Activated CD8-positive, alpha-beta T cell treated with anti-CD3 and anti-CD28 coated beads for 36 hours (primary cell): ENCODE measurements at regions of chr14 and their contacts with region 1.

Region 1: GRCh38 chr14:39232554-39233415 is 930 bp upstream of the MIA2 start:
- DNase-seq: no peak
- ATAC-seq: no peak
- H3K4me3 Mint-ChIP-seq: no peak overlapping the region
- H3K27ac Mint-ChIP-seq: peak overlapping the region; percentile 84
- H3K4me1 Mint-ChIP-seq: peaks cover 42% of the 10 kb centered on the region
- H3K27me3 Mint-ChIP-seq: no peaks in the 10 kb centered on the region
- CTCF ChIP-seq: no peak

Region 2: DNA sequence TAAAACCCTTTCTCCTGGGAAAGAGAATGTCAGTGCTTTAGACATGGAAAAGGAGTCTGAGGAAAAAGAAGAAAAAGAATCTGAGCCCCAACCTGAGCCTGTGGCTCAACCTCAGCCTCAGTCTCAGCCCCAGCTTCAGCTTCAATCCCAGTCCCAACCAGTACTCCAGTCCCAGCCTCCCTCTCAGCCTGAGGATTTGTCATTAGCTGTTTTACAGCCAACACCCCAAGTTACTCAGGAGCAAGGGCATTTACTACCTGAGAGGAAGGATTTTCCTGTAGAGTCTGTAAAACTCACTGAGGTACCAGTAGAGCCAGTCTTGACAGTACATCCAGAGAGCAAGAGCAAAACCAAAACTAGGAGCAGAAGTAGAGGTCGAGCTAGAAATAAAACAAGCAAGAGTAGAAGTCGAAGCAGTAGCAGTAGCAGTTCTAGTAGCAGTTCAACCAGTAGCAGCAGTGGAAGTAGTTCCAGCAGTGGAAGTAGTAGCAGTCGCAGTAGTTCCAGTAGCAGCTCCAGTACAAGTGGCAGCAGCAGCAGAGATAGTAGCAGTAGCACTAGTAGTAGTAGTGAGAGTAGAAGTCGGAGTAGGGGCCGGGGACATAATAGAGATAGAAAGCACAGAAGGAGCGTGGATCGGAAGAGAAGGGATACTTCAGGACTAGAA is 51.6 kb before region 1 on chr14:
- CTCF ChIA-PET with region 1: no interaction called
- POLR2A ChIA-PET with region 1: interaction called, 9 read pairs
- intact Hi-C with region 1: loop called (anchors 5 kb)
- DNase-seq: no peak
- ATAC-seq: no peak
- H3K4me3 Mint-ChIP-seq: no peak overlapping the region
- H3K27ac Mint-ChIP-seq: no peak overlapping the region
- H3K4me1 Mint-ChIP-seq: peaks cover 27% of the 10 kb centered on the region
- H3K27me3 Mint-ChIP-seq: no peaks in the 10 kb centered on the region
- CTCF ChIP-seq: no peak

Region 3: GRCh38 chr14:39247256-39247655 is 14.5 kb after region 1 on chr14:
- CTCF ChIA-PET with region 1: interaction called, 15 read pairs
- POLR2A ChIA-PET with region 1: interaction called, 5 read pairs
- intact Hi-C with region 1: no loop called
- DNase-seq: no peak
- ATAC-seq: no peak
- H3K4me3 Mint-ChIP-seq: no peak overlapping the region
- H3K27ac Mint-ChIP-seq: no peak overlapping the region
- H3K4me1 Mint-ChIP-seq: no peaks in the 10 kb centered on the region
- H3K27me3 Mint-ChIP-seq: peaks cover 2% of the 10 kb centered on the region
- CTCF ChIP-seq: no peak

Region 4: DNA sequence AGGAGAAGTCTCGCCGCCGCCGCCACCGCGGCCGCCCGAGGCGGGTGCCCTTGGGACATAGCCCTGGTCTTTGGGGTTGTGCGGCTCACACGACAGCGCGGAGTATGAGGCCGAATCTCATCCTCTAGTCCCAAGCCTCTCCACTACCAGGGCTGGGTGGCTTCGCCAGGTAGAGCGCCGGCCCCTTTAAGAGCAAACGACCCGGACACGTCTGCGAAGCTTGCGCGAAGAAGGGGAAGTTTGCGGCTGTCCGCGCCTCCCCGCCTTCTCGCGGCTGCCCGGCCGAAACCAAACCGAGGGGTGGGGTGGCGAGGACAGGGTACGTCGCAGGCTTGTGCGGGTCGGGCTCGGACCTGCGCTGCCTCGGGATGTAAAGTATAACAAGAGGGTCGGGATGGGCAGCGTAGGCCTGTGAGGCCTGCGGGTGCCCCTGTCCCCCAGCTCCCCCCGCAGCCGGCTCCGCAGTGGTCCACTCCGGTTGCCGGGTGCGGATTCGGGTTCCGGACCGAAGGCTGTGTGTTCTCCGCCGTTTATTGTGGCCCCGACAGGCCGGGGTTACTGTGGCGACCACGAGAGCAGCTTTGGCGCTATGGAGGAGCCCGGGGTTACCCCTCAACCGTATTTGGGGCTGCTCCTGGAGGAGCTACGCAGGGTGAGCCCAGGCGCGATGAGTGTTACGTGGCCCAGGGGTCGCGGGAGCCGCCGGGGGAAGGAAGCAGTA is 34.2 kb after region 1 on chr14:
- CTCF ChIA-PET with region 1: interaction called, 6 read pairs
- POLR2A ChIA-PET with region 1: interaction called, 10 read pairs
- intact Hi-C with region 1: loop called (anchors 2 kb)
- DNase-seq: peak; percentile 75
- ATAC-seq: peak; percentile 75
- H3K4me3 Mint-ChIP-seq: peak overlapping the region; percentile 77
- H3K27ac Mint-ChIP-seq: peak overlapping the region; percentile 99
- H3K4me1 Mint-ChIP-seq: peaks cover 47% of the 10 kb centered on the region
- H3K27me3 Mint-ChIP-seq: no peaks in the 10 kb centered on the region
- CTCF ChIP-seq: no peak

Region 5: DNA sequence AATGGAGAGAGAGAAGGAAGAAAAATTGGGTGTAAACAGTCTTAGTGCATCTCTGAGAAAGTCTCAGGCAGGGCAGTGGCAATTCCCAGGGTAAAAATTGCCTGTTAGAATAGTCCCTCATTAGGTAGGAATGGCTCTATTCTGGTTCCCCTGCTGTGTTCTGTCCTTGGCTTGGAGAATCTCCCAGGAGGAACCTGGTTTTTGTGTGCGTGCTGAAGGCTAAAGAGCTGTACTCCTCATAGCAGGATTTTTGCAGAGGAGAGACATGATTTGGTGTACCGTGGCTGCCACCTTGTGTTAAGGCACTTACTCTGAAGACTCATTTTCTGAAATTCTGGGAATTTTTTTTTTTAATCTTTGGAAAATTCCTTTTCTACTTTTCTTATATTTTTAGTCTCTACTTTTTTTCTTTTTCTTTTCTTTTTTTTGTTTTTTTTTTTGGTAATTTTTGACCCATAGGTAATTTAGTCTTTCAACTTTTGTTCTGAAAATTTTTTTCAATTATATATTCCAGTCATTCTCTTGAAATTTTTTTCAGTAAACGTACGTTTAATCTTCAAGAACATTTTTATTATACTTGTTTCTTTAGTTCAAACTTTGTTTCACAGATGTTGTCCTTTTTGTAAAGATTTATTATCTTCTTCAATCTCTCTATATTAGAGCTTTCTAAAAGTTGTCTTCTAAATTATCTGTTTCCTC is 135.6 kb after region 1 on chr14:
- CTCF ChIA-PET with region 1: interaction called, 11 read pairs
- POLR2A ChIA-PET with region 1: no interaction called
- intact Hi-C with region 1: loop called (anchors 10 kb)
- DNase-seq: peak; percentile 54
- ATAC-seq: no peak
- H3K4me3 Mint-ChIP-seq: no peak overlapping the region
- H3K27ac Mint-ChIP-seq: no peak overlapping the region
- H3K4me1 Mint-ChIP-seq: no peaks in the 10 kb centered on the region
- H3K27me3 Mint-ChIP-seq: no peaks in the 10 kb centered on the region
- CTCF ChIP-seq: peak; percentile 67

Region 6: DNA sequence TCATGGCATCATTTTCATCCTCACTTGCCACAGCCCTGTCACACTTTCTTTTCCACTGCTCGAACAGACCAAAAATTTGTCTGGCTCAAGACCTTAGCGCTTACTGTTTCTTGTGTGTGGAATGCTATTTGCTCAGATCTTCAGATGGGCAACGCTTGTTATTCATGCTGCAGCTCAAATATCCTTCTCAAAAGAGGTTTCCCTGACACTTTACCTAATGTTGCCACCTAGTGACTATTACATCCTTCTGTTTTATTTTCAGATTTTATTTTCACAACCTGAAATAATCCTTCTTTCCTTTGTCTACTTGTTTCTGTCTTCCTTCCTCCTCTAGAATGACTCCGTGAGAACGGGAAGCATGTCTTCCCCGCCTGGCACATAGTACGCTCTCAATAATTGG is 193.8 kb after region 1 on chr14:
- CTCF ChIA-PET with region 1: interaction called, 54 read pairs
- POLR2A ChIA-PET with region 1: interaction called, 3 read pairs
- intact Hi-C with region 1: loop called (anchors 5 kb)
- DNase-seq: no peak
- ATAC-seq: no peak
- H3K4me3 Mint-ChIP-seq: peak overlapping the region; percentile 31
- H3K27ac Mint-ChIP-seq: peak overlapping the region; percentile 36
- H3K4me1 Mint-ChIP-seq: peaks cover 54% of the 10 kb centered on the region
- H3K27me3 Mint-ChIP-seq: no peaks in the 10 kb centered on the region
- CTCF ChIP-seq: peak; percentile 55